Activated CD4-positive, alpha-beta T cell treated with anti-CD3 and anti-CD28 coated beads, Interleukin-2, amount 10 ng/mL, durations not matched to agents 24 days and 14 days (primary cell): ENCODE measurements at regions of chr12 and their contacts with region 1.

Region 1: GRCh38 chr12:110280779-110281548 is at the start of gene ATP2A2:
- DNase-seq: peak; percentile 97
- H3K4me3 Mint-ChIP-seq: peak within 1 kb of the TSS; percentile 97
- H3K27ac Mint-ChIP-seq: peak within 1 kb of the TSS; percentile 93
- H3K4me1 Mint-ChIP-seq: peaks cover 41% of the 10 kb centered on the region
- H3K27me3 Mint-ChIP-seq: peaks cover 14% of the 10 kb centered on the region
- total RNA-seq, gene ATP2A2: 219 and 222 TPM in 2 replicates

Region 2: GRCh38 chr12:110042264-110042663 is 238.7 kb before region 1 on chr12:
- intact Hi-C with region 1: loop called (anchors 5 kb)
- DNase-seq: no peak
- H3K4me3 Mint-ChIP-seq: no peak overlapping the region
- H3K27ac Mint-ChIP-seq: peak overlapping the region; percentile 59
- H3K4me1 Mint-ChIP-seq: peaks cover 46% of the 10 kb centered on the region
- H3K27me3 Mint-ChIP-seq: no peaks in the 10 kb centered on the region

Region 3: DNA sequence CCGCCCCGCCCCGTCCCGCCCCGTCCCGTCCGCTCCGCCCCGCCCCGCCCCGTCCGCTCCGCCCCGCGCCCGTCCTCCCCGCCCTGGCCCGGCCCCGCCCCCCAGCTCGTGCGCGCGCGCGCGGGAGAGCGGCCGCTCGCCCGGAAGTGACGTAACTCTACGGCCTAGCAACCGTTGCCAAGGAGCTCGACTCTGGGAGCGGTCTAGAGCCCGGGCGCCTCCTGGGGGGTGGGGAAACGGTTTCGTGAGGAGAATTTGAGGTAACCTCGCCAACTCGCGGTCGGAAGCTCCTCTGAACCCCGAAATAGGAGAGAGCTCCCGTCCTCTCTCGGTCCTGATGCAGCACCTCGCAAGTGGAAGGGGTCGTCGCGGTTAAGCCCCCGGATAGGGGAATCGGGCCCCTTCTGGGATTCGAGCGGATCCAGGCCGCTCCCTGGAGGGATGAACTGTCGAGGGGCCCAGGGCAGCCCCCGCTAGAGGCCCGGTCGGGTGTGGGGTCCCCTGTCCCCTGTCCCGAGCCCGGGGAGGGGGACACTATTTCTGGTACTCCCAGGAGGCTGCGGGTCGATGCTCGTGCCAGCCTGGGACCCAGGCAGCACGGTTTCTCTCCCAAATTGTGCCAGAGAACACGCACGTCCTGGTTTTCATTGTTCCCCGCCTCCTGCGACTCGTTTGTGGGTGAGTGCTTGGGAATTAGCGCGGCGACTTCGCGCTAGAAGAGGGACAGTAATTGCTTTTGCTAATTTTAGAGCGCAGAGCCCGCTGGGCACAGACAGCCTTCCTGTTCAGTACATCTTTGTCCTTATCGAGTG is 156.6 kb before region 1 on chr12 and contains the start of gene IFT81:
- intact Hi-C with region 1: loop called (anchors 1 kb)
- DNase-seq: peak; percentile 99
- H3K4me3 Mint-ChIP-seq: peak within 1 kb of the TSS; percentile 86
- H3K27ac Mint-ChIP-seq: peak within 1 kb of the TSS; percentile 85
- H3K4me1 Mint-ChIP-seq: peaks cover 9% of the 10 kb centered on the region
- H3K27me3 Mint-ChIP-seq: peaks cover 33% of the 10 kb centered on the region
- total RNA-seq, gene IFT81: 1.5 and 1.6 TPM in 2 replicates